Lower leg skin (tissue), 4 donors: ENCODE measurements at regions of chr19 and their contacts with region 1.

Region 1: GRCh38 chr19:2475702-2476450 is at the start of gene GADD45B:
- DNase-seq: peak; percentile 98 to 99
- H3K4me3 ChIP-seq: peak within 1 kb of the TSS; percentile 92
- CTCF ChIP-seq: no peak
- POLR2A ChIP-seq: peak in 1 of 2 donors; percentile 100
- total RNA-seq, gene GADD45B: 74.0 to 205 (median 106) TPM

Region 2: GRCh38 chr19:2416321-2417097 is 59.4 kb before region 1 on chr19:
- intact Hi-C with region 1: no loop called
- DNase-seq: no peak
- H3K4me3 ChIP-seq: no peak overlapping the region
- CTCF ChIP-seq: no peak
- POLR2A ChIP-seq: no peak

Region 3: GRCh38 chr19:2543463-2544442 is 67.9 kb after region 1 on chr19:
- intact Hi-C with region 1: loop called (anchors 5 kb)
- DNase-seq: peak; percentile 91 to 98
- H3K4me3 ChIP-seq: no peak overlapping the region
- CTCF ChIP-seq: peak in 1 of 3 donors; percentile 12
- POLR2A ChIP-seq: no peak

Region 4: GRCh38 chr19:2610637-2611482 is 135.0 kb after region 1 on chr19:
- intact Hi-C with region 1: loop called (anchors 2 kb)
- DNase-seq: peak; percentile 89 to 99
- H3K4me3 ChIP-seq: no peak overlapping the region
- CTCF ChIP-seq: peak in 2 of 3 donors; percentile 95 to 98
- POLR2A ChIP-seq: no peak

Region 5: DNA sequence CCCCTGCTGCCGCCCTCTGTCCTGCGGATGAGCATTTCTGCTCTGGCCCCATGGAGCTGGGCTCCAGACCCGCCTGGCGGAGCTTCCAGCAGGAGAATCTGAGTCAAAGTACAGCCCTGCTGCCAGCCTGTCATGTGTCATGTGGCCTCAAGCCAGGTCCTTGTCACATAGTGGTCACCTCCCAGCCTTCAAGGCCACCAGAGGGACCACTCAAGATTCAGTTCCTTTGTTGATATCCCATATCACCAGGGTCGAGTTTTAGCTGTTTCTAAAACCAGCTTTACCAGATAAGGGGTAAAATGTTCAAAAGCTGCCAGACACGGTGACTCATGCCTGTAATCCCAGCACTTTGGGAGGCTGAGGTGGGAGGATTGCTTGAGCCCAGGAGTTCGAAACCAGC is 322.9 kb after region 1 on chr19:
- intact Hi-C with region 1: no loop called
- DNase-seq: no peak
- H3K4me3 ChIP-seq: no peak overlapping the region
- CTCF ChIP-seq: no peak
- POLR2A ChIP-seq: no peak